Sciatic nerve (tissue), 2 donors: ENCODE measurements at regions of chr12 and their contacts with region 1.

Region 1: DNA sequence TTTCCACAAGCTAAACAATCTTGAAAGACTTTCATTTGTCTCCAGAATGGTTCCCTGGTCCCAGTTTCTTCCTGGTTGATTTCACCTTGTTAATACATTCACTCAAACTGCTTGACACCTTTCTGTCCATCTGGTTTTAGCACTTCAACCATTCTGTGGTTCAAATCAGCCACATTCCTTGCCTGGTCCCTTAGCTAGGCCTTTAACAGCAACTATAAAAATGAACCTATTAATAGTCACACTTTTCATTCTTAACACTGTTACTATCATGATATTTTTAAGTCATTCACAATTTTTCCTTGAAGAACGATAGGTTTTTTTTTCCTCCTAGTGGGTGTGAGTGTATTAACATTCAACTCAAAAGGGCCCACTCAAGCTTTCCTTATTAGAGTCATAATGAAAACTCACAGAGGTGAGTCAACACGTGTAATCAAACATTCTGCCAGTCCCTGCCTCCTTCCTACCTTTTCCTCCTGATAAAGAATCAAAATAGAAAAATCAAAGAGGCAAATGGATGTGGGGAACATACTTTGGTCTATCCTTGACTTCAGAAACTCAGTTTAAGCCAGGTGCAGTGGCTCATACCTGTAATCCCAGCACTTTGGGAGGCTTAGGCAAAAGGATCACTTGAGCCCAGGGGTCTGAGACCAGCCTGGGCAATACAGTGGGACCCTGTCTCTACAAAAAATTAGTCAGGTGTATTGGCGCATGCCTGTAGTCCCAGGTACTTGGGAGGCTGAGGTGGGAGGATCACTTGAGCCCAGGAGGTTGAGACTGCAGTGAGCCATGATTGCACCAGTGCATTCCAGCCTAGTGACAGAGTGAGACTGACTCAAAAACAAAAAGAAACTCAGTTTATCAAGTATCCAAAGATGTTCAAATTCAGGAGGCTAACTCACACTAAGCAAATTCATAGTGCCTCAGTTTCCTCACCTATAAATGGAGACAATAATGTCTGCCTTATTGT is 34.5 kb upstream of the CCNT1 start:
- DNase-seq: no peak
- ATAC-seq: no peak

Region 2: DNA sequence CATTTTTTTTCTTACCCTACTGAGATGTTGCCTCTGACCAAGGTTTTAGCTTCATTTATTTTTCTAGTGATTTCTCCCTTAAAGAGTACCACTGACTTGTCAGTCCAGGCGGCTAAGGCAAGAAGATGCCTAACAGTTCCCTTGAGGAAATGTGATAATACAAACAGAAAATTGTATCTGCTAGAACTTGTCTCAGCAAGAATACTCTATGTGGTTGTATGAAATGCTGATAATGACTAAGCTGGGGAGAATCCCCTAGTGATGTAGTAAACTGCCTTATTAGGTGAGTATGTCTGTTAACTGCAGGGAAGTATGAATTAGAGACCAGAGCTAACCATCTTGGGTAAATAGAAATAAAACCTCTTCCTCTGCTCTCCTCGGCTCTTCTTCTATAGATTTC is 262.0 kb before region 1 on chr12:
- intact Hi-C with region 1: no loop called
- DNase-seq: no peak
- ATAC-seq: no peak

Region 3: DNA sequence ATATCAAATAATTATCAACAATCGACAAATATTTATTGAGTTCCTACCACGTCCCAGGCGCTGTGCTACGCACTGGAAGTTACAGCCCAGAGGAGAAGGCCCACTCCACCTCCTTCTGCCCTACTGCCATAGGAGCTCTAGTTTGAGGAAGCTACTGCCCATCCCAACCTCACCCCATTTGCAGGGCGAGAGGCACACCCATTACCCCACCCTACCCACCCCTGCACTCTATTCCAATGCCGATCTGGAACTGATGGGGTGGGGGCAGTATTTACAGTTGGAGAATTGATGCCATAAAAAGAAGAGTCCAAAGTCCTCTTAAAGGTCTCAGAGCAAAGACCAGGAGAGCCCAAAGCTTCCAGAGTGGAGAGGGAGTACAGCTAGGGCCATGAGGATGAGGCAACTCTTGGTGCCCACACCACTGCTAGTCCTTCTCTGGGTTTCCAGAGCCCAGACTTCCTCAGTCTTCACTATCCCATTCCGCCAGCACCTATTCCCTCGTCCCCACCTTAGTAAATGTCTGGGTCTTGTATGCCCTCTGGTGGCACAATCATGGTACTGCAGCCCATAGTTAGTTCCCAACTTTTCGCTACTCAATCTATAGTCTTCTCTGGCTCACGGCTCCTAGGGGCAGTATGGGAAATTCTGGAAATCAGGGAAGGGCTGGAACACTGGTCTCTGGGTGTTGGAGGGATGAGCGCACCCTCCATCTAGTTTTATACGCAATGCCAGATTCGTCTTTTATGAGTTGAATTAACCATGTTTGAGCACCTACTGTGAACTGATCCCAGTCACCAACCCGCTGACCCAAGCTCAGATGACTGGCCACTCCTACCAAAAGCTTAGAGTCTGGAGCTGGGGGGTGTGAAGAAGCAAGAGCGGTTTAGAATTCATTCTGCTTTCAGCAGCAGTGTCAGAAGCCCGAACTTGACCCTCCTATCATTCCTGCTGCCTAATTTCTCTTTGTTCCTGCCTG is 44.7 kb after region 1 on chr12:
- intact Hi-C with region 1: loop called (anchors 5 kb)
- DNase-seq: peak; percentile 83
- ATAC-seq: peak; percentile 92

Region 4: DNA sequence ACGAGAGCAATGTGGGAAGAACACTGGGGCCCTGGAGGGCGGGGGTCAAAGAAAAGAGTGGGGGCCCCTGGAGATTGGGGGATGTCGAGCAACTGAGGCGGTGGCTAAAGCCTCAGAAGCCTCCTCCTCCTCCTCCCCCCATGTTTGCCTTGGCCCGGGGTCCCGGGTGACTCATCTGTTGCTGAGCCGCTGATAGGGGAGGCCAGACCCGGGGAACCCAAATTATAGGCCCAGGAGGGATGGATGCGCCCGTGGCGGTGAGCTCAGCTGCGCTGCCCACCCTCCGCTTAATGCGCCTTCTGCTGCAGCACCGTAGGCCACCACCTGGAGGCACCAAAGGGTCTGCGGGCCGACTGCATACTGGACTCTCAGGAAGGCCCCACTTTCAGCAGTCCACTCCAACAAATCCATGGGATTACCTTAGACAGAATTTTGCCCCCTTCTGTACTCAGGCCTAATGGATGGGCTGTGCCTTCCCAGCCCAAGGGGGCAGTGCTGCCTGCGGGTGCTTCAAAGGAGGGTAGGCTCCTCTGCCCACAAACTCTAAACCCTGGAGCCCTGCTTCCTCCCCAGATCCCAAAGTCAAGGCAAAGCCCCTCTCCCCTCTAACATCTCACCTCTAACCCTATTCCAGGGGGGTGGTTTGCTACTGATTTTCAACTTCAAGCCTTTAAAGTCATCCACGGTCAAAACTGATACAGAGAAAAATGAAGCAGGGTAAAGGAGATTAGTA is 223.1 kb after region 1 on chr12:
- intact Hi-C with region 1: no loop called
- DNase-seq: peak; percentile 82
- ATAC-seq: peak; percentile 80